ENCODE measurements at regions of chr15 and their contacts with region 1.

Region 1: GRCh38 chr15:76139368-76140073 is 79.7 kb downstream of the TMEM266 start:
- DNase-seq: peak; percentile 79
- H3K4me3 Mint-ChIP-seq: no peak overlapping the region
- H3K27ac Mint-ChIP-seq: no peak overlapping the region
- H3K4me1 Mint-ChIP-seq: no peaks in the 10 kb centered on the region
- H3K27me3 Mint-ChIP-seq: peaks cover 21% of the 10 kb centered on the region
- CTCF ChIP-seq: peak; percentile 86

Region 2: GRCh38 chr15:75928680-75929608 is 210.6 kb before region 1 on chr15:
- CTCF ChIA-PET with region 1: interaction called, 16 read pairs
- POLR2A ChIA-PET with region 1: interaction called, 5 read pairs
- intact Hi-C with region 1: loop called (anchors 2 kb)
- DNase-seq: peak; percentile 67
- H3K4me3 Mint-ChIP-seq: no peak overlapping the region
- H3K27ac Mint-ChIP-seq: peak overlapping the region; percentile 7
- H3K4me1 Mint-ChIP-seq: peaks cover 11% of the 10 kb centered on the region
- H3K27me3 Mint-ChIP-seq: no peaks in the 10 kb centered on the region
- CTCF ChIP-seq: peak; percentile 46

Region 3: GRCh38 chr15:76057332-76058000 is 82.1 kb before region 1 on chr15:
- CTCF ChIA-PET with region 1: interaction called, 264 read pairs
- POLR2A ChIA-PET with region 1: interaction called, 51 read pairs
- intact Hi-C with region 1: loop called (anchors 1 kb)
- DNase-seq: peak; percentile 60
- H3K4me3 Mint-ChIP-seq: peak overlapping the region; percentile 38
- H3K27ac Mint-ChIP-seq: peak overlapping the region; percentile 21
- H3K4me1 Mint-ChIP-seq: peaks cover 15% of the 10 kb centered on the region
- H3K27me3 Mint-ChIP-seq: peaks cover 21% of the 10 kb centered on the region
- CTCF ChIP-seq: peak; percentile 61

Region 4: DNA sequence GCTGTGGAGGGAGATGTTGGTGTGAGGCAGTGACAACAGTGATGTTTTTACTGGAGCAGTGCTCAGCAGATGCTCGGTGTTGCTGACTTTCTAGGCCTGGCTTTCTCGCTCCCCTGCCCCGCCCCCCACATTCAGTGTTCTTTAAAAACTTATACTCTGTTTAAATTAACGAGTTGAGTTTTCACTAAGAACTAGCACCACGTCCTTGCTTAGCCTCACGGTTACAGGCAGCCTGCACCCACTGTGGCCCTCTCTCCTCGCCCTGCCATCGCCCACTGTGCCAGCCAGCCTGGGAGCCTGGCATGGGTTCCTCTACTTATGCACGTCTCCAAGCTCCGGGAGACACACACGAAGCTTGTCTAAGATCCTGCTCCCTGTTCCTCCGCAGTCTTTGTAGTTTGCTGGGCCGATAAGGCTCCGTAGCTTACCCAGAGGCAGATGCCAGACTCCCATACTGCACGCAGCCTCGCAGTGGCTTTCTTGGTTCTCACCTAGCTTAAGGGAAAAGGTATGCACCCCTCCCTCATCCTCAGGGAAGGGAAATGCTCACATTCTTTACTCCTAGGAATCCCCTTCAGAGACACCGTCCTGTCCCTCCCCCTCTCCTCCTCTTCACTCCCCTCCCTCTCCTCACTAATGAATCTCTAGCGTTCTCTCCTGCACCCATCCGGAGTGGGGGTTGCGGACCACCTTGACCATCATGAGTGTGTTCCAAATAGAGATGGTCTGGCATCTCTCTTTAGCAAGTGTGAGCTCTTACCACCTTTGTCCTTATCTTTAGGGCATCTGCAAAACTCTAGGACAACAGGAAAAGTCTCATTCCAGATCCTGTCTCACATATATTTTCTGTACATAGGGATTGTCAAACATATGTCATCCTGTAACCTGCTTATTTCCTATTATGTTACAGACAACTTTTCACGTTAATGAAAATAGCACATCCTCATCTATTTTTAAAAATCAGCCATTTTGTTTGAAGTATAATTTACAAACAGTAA is 23.3 kb before region 1 on chr15:
- CTCF ChIA-PET with region 1: interaction called, 19 read pairs
- POLR2A ChIA-PET with region 1: interaction called, 3 read pairs
- intact Hi-C with region 1: no loop called
- DNase-seq: no peak
- H3K4me3 Mint-ChIP-seq: no peak overlapping the region
- H3K27ac Mint-ChIP-seq: no peak overlapping the region
- H3K4me1 Mint-ChIP-seq: no peaks in the 10 kb centered on the region
- H3K27me3 Mint-ChIP-seq: peaks cover 10% of the 10 kb centered on the region
- CTCF ChIP-seq: no peak

Region 5: DNA sequence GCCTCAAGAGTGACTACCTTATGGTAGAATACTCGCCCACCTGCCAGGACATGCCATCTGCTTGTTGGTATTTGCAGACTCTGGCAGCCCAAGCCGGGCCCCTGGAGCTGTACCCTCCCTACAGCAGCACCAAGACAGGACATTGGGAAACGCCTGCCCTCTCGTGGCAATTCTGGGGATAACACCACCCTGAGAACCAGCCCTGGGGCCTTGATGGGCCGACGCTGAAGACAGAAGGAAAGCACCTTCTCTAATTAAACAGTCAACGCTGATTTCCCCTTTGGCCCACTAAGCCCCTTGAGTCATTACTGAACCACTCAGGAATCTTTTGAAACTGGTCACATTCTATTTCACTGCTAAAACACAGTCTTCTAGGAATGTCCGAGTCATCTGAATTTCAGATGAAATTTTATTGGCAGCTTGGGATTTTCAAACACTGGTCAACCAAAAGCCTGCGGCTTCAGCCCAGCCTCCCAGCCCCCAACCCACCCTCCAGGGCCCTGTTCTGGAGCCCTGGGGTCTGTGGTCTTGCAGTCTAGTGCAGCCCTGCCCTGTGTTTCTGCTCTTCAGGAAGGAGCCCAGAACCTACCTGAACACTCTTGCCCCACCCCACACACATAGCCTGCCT is 11.6 kb after region 1 on chr15:
- CTCF ChIA-PET with region 1: interaction called, 82 read pairs
- POLR2A ChIA-PET with region 1: interaction called, 7 read pairs
- intact Hi-C with region 1: no loop called
- DNase-seq: peak; percentile 81
- H3K4me3 Mint-ChIP-seq: no peak overlapping the region
- H3K27ac Mint-ChIP-seq: no peak overlapping the region
- H3K4me1 Mint-ChIP-seq: peaks cover 10% of the 10 kb centered on the region
- H3K27me3 Mint-ChIP-seq: no peaks in the 10 kb centered on the region
- CTCF ChIP-seq: peak; percentile 90

Region 6: DNA sequence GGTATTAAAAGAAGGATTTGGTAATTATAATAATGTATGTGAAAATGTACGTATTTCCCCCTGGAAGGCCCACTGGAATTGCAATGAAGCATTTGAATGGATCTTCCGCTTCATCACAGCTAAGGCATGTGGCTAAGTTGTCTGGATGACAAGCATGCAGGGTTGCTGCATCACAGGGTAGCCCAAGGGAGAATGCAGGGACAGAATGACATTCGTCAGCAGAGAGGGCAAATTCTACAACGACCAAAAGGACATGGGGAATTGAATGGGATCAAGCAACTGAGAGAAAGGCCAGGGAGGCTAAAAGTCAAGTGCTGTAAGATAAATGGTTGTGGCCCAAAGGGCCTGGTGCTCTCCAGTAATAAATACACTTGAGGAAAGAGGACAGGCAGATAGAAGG is 292.4 kb after region 1 on chr15:
- CTCF ChIA-PET with region 1: no interaction called
- POLR2A ChIA-PET with region 1: no interaction called
- intact Hi-C with region 1: no loop called
- DNase-seq: no peak
- H3K4me3 Mint-ChIP-seq: no peak overlapping the region
- H3K27ac Mint-ChIP-seq: no peak overlapping the region
- H3K4me1 Mint-ChIP-seq: peaks cover 6% of the 10 kb centered on the region
- H3K27me3 Mint-ChIP-seq: no peaks in the 10 kb centered on the region
- CTCF ChIP-seq: no peak

Measured in MCF 10A (cell line).